K562 (cell line): ENCODE measurements at regions of chr3 and their contacts with region 1.

Region 1: DNA sequence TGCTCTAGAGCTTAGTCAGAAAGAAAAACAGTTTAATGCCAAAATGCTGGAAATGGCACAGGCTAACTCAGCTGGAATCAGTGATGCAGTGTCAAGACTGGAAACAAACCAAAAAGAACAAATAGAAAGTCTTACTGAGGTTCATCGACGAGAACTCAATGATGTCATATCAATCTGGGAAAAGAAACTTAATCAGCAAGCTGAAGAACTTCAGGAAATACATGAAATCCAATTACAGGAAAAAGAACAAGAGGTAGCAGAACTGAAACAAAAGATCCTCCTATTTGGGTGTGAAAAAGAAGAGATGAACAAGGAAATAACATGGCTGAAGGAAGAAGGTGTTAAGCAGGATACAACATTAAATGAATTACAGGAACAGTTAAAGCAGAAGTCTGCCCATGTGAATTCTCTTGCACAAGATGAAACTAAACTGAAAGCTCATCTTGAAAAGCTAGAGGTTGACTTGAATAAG is 150.5 kb upstream of the LRRFIP2 start:
- DNase-seq: no peak
- ATAC-seq: no peak
- H3K4me3 ChIP-seq: no peak overlapping the region
- H3K27ac ChIP-seq: no peak overlapping the region
- H3K4me1 ChIP-seq: no peaks in the 10 kb centered on the region
- H3K27me3 ChIP-seq: no peaks in the 10 kb centered on the region
- CTCF ChIP-seq: no peak
- EP300 ChIP-seq: no peak
- POLR2A ChIP-seq: no peak
- RAD21 ChIP-seq: no peak

Region 2: DNA sequence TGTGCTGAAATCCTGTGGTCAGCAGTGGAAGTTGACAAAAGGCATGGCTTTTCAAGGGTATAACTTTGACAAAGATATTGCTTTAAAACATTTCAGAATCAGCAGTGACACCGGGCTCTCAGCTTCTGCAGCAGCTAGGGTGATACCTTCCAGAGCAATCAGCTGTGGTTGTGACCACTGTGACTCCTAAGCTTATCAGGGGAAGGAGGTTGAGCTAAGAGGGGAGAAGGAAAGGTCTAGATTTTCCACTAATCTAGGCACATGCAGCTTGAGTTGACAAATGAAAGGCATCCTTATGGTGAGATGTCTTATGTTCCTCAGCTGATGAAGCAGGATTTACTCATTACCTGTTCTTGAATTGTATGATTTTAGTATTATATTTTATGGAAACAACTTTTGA is 134.2 kb before region 1 on chr3:
- CTCF ChIA-PET with region 1: no interaction called
- POLR2A ChIA-PET with region 1: no interaction called
- in situ Hi-C with region 1: no loop called
- intact Hi-C with region 1: no loop called
- DNase-seq: peak in 1 of 4 experiments; percentile 55
- ATAC-seq: peak; percentile 75
- H3K4me3 ChIP-seq: no peak overlapping the region
- H3K27ac ChIP-seq: no peak overlapping the region
- H3K4me1 ChIP-seq: peaks cover 0 to 5% of the 10 kb centered on the region in 2 experiments; a peak in 2 of 5 replicates
- H3K27me3 ChIP-seq: no peaks in the 10 kb centered on the region; a peak in 1 of 5 replicates
- CTCF ChIP-seq: no peak
- EP300 ChIP-seq: no peak
- POLR2A ChIP-seq: no peak
- RAD21 ChIP-seq: no peak

Region 3: GRCh38 chr3:37338500-37338899 is 13.6 kb after region 1 on chr3:
- CTCF ChIA-PET with region 1: interaction called, 3 read pairs
- POLR2A ChIA-PET with region 1: interaction called, 20 read pairs
- in situ Hi-C with region 1: no loop called
- intact Hi-C with region 1: no loop called
- DNase-seq: no peak
- ATAC-seq: no peak
- H3K4me3 ChIP-seq: no peak overlapping the region
- H3K27ac ChIP-seq: no peak overlapping the region
- H3K4me1 ChIP-seq: no peaks in the 10 kb centered on the region
- H3K27me3 ChIP-seq: no peaks in the 10 kb centered on the region
- CTCF ChIP-seq: no peak
- EP300 ChIP-seq: no peak
- POLR2A ChIP-seq: no peak
- RAD21 ChIP-seq: no peak

Region 4: DNA sequence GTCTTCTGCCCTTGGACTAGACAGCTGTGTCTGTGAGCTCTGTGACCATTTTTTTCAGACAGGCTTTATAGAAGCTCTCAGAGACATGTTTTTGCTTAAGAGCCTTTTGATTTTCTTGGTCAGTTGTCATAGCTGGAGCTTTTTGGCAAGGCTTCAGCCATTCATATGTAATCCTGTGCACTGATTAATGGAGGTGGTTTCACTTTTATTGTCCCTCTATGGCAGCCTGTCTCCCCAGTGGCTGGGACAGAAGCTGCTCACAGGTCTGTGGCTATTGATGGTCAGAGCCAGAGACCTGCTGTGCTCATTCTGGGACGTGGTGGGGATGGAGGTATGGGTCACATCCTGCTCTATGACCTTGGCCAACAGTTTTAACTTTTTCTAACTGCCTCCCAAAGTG is 76.1 kb after region 1 on chr3:
- CTCF ChIA-PET with region 1: no interaction called
- POLR2A ChIA-PET with region 1: no interaction called
- in situ Hi-C with region 1: no loop called
- intact Hi-C with region 1: no loop called
- DNase-seq: no peak
- ATAC-seq: no peak
- H3K4me3 ChIP-seq: no peak overlapping the region
- H3K27ac ChIP-seq: no peak overlapping the region
- H3K4me1 ChIP-seq: peaks cover 0 to 5% of the 10 kb centered on the region in 2 experiments; a peak in 2 of 5 replicates
- H3K27me3 ChIP-seq: no peaks in the 10 kb centered on the region
- CTCF ChIP-seq: no peak
- EP300 ChIP-seq: no peak
- POLR2A ChIP-seq: no peak
- RAD21 ChIP-seq: no peak